ENCODE measurements at regions of chr9 and their contacts with region 1.

Region 1: GRCh38 chr9:124133727-124134126 is 122.2 kb downstream of the LHX2 start:
- DNase-seq: peak; percentile 37 to 58 (median 46)
- H3K4me3 ChIP-seq: no peak overlapping the region
- H3K4me3 Mint-ChIP-seq: no peak overlapping the region
- H3K27ac ChIP-seq: no peak overlapping the region
- H3K27ac Mint-ChIP-seq: no peak overlapping the region
- H3K4me1 ChIP-seq: no peaks in the 10 kb centered on the region
- H3K4me1 Mint-ChIP-seq: peaks cover 7% of the 10 kb centered on the region
- H3K27me3 ChIP-seq: no peaks in the 10 kb centered on the region
- H3K27me3 Mint-ChIP-seq: peaks cover 4 to 11% (median 8%) of the 10 kb centered on the region in 3 donors
- CTCF ChIP-seq: peak; percentile 51

Region 2: GRCh38 chr9:124197177-124198095 is 63.7 kb after region 1 on chr9:
- intact Hi-C with region 1: loop called (anchors 5 to 10 kb)
- DNase-seq: peak; percentile 92 to 97 (median 94)
- H3K4me3 ChIP-seq: peak overlapping the region in 2 of 3 experiments; percentile 23 to 50
- H3K4me3 Mint-ChIP-seq: peak overlapping the region; percentile 7 to 77
- H3K27ac ChIP-seq: peak overlapping the region; percentile 70 to 93
- H3K27ac Mint-ChIP-seq: peak overlapping the region; percentile 92 to 99 (median 96)
- H3K4me1 ChIP-seq: peaks cover 58 to 62% of the 10 kb centered on the region in 2 donors
- H3K4me1 Mint-ChIP-seq: peaks cover 73% of the 10 kb centered on the region
- H3K27me3 ChIP-seq: no peaks in the 10 kb centered on the region
- H3K27me3 Mint-ChIP-seq: peaks cover 0 to 4% (median 0%) of the 10 kb centered on the region in 3 donors
- CTCF ChIP-seq: peak; percentile 31

Region 3: GRCh38 chr9:124291801-124292396 is 158.2 kb after region 1 on chr9:
- intact Hi-C with region 1: loop called in 1 of 2 experiments (anchors 10 kb)
- DNase-seq: peak; percentile 46 to 79 (median 77)
- H3K4me3 ChIP-seq: peak overlapping the region in 1 of 3 experiments; percentile 45
- H3K4me3 Mint-ChIP-seq: peak overlapping the region; percentile 12 to 67
- H3K27ac ChIP-seq: peak overlapping the region; percentile 8 to 45
- H3K27ac Mint-ChIP-seq: peak overlapping the region in 3 of 7 donors; percentile 55 to 59 (median 59)
- H3K4me1 ChIP-seq: peaks cover 70 to 74% of the 10 kb centered on the region in 2 donors
- H3K4me1 Mint-ChIP-seq: peaks cover 82% of the 10 kb centered on the region
- H3K27me3 ChIP-seq: no peaks in the 10 kb centered on the region
- H3K27me3 Mint-ChIP-seq: peaks cover 0 to 4% (median 0%) of the 10 kb centered on the region in 3 donors
- CTCF ChIP-seq: no peak

Measured in CD14-positive monocyte (primary cell).